ENCODE measurements at regions of chr1 and their contacts with region 1.

Region 1: GRCh38 chr1:68269637-68270426 is 37.5 kb upstream of the WLS start:
- DNase-seq: no peak
- H3K4me3 ChIP-seq: no peak overlapping the region
- H3K27ac ChIP-seq: no peak overlapping the region
- H3K4me1 ChIP-seq: peaks cover 0 to 8% (median 7%) of the 10 kb centered on the region in 4 donors
- H3K27me3 ChIP-seq: no peaks in the 10 kb centered on the region
- CTCF ChIP-seq: no peak
- EP300 ChIP-seq: no peak
- POLR2A ChIP-seq: no peak

Region 2: GRCh38 chr1:68313735-68314134 is 43.9 kb after region 1 on chr1:
- intact Hi-C with region 1: loop called (anchors 2 kb)
- DNase-seq: no peak
- H3K4me3 ChIP-seq: peak overlapping the region in 3 of 4 donors; percentile 13 to 27 (median 14)
- H3K27ac ChIP-seq: peak overlapping the region; percentile 43 to 67 (median 57)
- H3K4me1 ChIP-seq: peaks cover 0 to 27% (median 23%) of the 10 kb centered on the region in 4 donors
- H3K27me3 ChIP-seq: no peaks in the 10 kb centered on the region
- CTCF ChIP-seq: no peak
- EP300 ChIP-seq: no peak
- POLR2A ChIP-seq: no peak

Region 3: DNA sequence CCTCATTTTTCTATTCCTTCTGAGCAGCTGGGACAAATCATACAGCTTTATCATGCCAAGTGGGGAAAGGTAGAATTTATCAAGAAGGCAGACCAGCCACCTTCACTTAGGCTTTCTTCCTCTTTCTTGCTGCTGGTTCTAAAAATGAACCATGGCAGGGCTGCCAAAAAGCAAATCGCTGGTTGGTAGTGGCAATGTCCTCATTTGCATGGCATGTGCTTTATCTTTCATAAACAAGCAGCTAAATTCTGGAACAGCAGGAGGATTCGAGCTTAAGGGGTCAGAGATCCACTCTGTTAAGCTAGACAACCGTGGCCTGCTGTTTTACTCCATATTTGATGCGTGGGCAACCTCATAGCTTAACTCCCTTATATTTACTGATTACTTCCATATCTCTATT is 88.6 kb after region 1 on chr1:
- intact Hi-C with region 1: no loop called
- DNase-seq: no peak
- H3K4me3 ChIP-seq: no peak overlapping the region
- H3K27ac ChIP-seq: no peak overlapping the region
- H3K4me1 ChIP-seq: peaks cover 6 to 18% (median 15%) of the 10 kb centered on the region in 4 donors
- H3K27me3 ChIP-seq: no peaks in the 10 kb centered on the region
- CTCF ChIP-seq: no peak
- EP300 ChIP-seq: no peak
- POLR2A ChIP-seq: no peak

Measured in esophagus muscularis mucosa (tissue), 4 donors.